Activated T-helper 2 cell treated with anti-CD3 and anti-CD28 coated beads, Interferon-gamma antibody, Interleukin-2, Interleukin-4, amounts not matched to agents 10 μg/mL and 5 μg/mL and 100 μg/mL, durations not matched to agents 14 hours and 24 hours and 36 hours (primary cell): ENCODE measurements at regions of chr2 and their contacts with region 1.

Region 1: DNA sequence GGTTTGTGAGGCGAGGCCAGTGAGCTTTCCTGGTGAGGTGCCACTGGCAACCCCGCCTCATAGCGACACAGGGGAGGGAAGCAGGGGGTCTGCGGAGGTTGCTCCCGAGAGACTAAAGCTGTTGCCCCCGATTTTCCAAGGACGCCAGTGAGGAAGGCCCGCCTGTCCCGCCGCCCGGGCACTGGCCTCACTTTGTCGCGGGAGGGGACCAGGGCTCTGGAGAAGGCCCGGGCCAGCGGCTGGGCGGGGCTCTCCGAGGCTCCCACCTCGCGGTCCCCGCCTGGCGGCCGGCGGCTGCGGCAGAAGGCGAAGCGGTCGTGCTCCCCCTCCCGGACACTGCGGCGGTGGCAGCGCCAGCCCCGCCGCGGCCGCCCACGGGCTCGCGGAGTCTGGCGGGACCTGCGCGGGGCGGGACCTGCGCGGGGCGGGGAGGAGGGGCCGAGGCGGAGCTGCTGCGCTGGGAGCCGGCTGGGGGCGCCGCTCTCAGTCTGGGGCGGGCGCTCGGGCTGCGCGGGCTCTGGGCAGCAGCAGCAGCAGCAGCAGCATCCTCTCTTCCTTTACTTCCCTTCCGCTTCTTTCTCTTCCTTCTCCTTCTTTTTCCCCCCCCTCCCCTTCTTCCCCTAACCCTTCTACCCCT is at the start of gene MAP2:
- DNase-seq: peak; percentile 65
- H3K4me3 Mint-ChIP-seq: peak within 1 kb of the TSS; percentile 73
- H3K27ac Mint-ChIP-seq: no peak within 1 kb of the TSS
- H3K4me1 Mint-ChIP-seq: peaks cover 12% of the 10 kb centered on the region
- H3K27me3 Mint-ChIP-seq: peaks cover 36% of the 10 kb centered on the region
- total RNA-seq, gene MAP2: not detected in 2 replicates

Region 2: DNA sequence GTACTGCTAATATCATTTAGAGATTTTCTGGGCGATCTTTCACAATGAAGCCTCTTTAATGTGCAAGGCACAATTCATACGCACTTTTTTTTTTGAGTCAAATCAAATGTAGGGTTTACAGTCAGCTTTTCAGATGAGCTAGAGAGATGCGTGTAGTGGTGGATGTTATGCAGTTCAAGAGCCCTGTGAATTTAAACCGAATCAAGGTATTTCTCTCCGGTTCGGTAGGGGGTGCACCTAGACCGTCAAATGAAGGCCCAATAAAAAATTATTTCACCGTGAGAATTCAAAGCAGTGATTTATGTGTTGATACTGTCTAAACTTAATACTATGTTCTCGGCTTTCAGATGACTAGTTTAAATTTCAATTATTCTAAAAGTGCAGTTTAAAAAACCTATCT is 1016.0 kb before region 1 on chr2:
- intact Hi-C with region 1: loop called (anchors 10 kb)
- DNase-seq: no peak
- H3K4me3 Mint-ChIP-seq: no peak overlapping the region
- H3K27ac Mint-ChIP-seq: no peak overlapping the region
- H3K4me1 Mint-ChIP-seq: peaks cover 2% of the 10 kb centered on the region
- H3K27me3 Mint-ChIP-seq: peaks cover 50% of the 10 kb centered on the region

Region 3: DNA sequence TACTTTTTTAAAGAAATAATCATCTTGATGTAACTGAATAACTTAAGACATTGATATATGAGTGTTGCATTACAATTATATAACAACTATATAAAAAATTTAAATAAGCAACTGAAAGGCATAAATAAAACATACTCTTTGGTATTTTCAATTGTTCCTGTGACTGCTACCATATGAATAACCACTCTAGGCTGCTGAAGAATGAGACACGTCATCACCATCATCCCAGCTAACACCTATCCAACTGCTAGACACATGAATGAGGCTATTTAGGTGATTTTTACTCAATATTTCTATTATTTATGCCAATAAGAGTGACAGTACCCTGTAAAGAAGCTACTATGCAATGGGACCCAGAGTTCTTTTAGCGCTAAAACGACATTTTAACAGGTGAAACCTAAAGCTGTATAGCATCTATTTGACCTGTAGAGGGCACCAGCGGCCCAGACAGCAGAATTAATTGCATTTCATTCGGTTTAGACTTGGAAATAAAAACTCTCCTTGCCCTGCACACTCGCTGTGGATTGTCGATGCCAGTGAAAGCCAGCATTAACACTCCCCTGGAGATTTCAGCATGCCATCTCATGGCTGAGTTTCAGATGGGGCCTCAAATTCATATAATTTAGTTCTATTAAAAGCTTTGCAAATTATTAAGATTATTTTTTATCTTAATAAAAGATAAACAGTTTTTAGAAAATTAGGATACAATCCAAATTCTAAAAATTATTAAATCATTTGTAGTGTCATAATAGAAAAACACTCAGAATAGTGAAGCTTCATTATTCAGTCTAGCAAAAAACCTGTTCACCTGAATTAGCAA is 89.3 kb before region 1 on chr2:
- intact Hi-C with region 1: loop called (anchors 5 kb)
- DNase-seq: no peak
- H3K4me3 Mint-ChIP-seq: no peak overlapping the region
- H3K27ac Mint-ChIP-seq: no peak overlapping the region
- H3K4me1 Mint-ChIP-seq: no peaks in the 10 kb centered on the region
- H3K27me3 Mint-ChIP-seq: no peaks in the 10 kb centered on the region

Region 4: GRCh38 chr2:209577376-209578357 is 154.0 kb after region 1 on chr2:
- intact Hi-C with region 1: loop called (anchors 5 kb)
- DNase-seq: no peak
- H3K4me3 Mint-ChIP-seq: no peak overlapping the region
- H3K27ac Mint-ChIP-seq: no peak overlapping the region
- H3K4me1 Mint-ChIP-seq: peaks cover 2% of the 10 kb centered on the region
- H3K27me3 Mint-ChIP-seq: peaks cover 5% of the 10 kb centered on the region

Region 5: GRCh38 chr2:209960676-209961630 is 537.3 kb after region 1 on chr2:
- intact Hi-C with region 1: loop called (anchors 10 kb)
- DNase-seq: no peak
- H3K4me3 Mint-ChIP-seq: no peak overlapping the region
- H3K27ac Mint-ChIP-seq: no peak overlapping the region
- H3K4me1 Mint-ChIP-seq: no peaks in the 10 kb centered on the region
- H3K27me3 Mint-ChIP-seq: peaks cover 11% of the 10 kb centered on the region

Region 6: GRCh38 chr2:210002158-210003157 is 578.8 kb after region 1 on chr2 and contains the start of gene RPE:
- intact Hi-C with region 1: loop called (anchors 5 kb)
- DNase-seq: peak; percentile 95
- H3K4me3 Mint-ChIP-seq: peak within 1 kb of the TSS; percentile 95
- H3K27ac Mint-ChIP-seq: peak within 1 kb of the TSS; percentile 87
- H3K4me1 Mint-ChIP-seq: peaks cover 43% of the 10 kb centered on the region
- H3K27me3 Mint-ChIP-seq: no peaks in the 10 kb centered on the region
- total RNA-seq, gene RPE: 57.2 and 57.8 TPM in 2 replicates